ENCODE measurements at regions of chr20 and their contacts with region 1.

Region 1: GRCh38 chr20:21719592-21720214 is 14.2 kb downstream of the PAX1 start:
- DNase-seq: peak in 1 of 2 donors; percentile 52
- ATAC-seq: no peak
- H3K4me3 ChIP-seq: no peak overlapping the region
- H3K27ac ChIP-seq: no peak overlapping the region
- H3K4me1 ChIP-seq: peaks cover 0 to under 1% (median 0%) of the 10 kb centered on the region in 9 donors
- H3K27me3 ChIP-seq: peaks cover 0 to 47% (median 39%) of the 10 kb centered on the region in 7 donors
- CTCF ChIP-seq: peak; percentile 63 to 85 (median 74)

Region 2: DNA sequence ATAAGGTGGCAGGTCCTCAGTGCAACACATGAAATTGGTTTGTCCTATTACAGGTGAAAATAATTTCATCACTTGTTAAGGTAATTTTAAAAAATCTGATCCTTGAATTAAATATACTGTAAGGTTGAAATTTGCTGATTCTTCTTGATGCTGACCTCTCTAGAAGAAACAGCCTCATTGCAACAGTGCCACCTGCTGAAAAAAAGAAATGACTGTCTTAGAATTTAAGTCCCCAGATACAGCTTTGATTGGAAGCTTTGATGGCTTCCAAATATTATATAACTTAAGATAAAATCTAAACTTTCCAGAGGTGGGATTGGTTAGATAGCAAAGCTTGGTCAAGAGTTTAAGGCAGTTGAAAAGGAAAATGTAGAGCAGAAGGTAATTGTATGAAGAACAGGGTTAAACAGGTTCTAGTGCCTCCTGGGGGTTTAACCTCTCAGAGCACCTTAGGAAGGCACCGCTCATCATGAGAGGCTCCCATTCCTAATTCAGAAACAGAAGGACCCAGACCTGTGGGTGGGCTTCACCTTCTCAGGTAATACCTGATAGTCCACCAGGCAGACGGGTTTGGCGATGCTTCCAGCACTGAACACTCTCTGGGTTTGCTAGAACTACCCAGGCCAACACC is 386.7 kb after region 1 on chr20:
- intact Hi-C with region 1: loop called in 6 of 10 experiments (anchors 2 to 10 kb)
- DNase-seq: no peak
- ATAC-seq: no peak
- H3K4me3 ChIP-seq: no peak overlapping the region
- H3K27ac ChIP-seq: no peak overlapping the region
- H3K4me1 ChIP-seq: no peaks in the 10 kb centered on the region
- H3K27me3 ChIP-seq: no peaks in the 10 kb centered on the region
- CTCF ChIP-seq: peak in 7 of 9 donors; percentile 32 to 59 (median 46)

Region 3: DNA sequence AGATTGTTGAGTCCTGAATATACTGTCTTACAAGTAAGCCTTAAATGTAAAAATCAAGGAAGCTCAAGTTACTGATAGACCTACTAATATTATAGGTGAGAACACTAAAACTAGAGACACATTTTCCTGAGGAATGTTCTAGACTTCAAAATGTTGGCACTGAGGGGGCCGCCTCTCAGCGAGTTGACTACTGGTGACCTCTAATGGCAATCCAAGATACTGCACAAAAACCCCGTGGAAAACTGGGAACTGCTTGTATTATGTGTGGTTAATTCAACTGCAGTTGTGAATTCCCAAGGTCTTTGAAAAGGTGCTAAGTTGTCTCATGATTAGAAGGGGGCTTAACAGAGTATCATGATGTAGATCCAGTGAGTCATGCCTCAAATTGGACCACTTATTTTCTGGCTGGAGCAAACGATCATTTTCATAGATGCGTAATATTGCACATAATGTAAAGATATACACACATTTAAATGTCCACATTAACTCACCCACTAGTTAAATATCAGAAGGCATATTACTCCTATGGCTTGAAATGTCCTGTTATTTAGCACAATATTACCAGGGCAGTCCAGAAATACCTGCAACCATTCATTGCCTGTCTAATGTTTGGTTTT is 528.5 kb after region 1 on chr20:
- intact Hi-C with region 1: loop called in 2 of 10 experiments (anchors 10 kb)
- DNase-seq: no peak
- ATAC-seq: no peak
- H3K4me3 ChIP-seq: no peak overlapping the region
- H3K27ac ChIP-seq: no peak overlapping the region
- H3K4me1 ChIP-seq: no peaks in the 10 kb centered on the region
- H3K27me3 ChIP-seq: peaks cover 0 to 31% (median 12%) of the 10 kb centered on the region in 7 donors
- CTCF ChIP-seq: peak in 7 of 9 donors; percentile 45 to 66 (median 54)

Region 4: GRCh38 chr20:22303523-22303922 is 583.8 kb after region 1 on chr20:
- intact Hi-C with region 1: loop called in 1 of 10 experiments (anchors 10 kb)
- DNase-seq: no peak
- ATAC-seq: no peak
- H3K4me3 ChIP-seq: no peak overlapping the region
- H3K27ac ChIP-seq: no peak overlapping the region
- H3K4me1 ChIP-seq: no peaks in the 10 kb centered on the region
- H3K27me3 ChIP-seq: peaks cover 0 to 15% (median 0%) of the 10 kb centered on the region in 7 donors
- CTCF ChIP-seq: no peak

Region 5: DNA sequence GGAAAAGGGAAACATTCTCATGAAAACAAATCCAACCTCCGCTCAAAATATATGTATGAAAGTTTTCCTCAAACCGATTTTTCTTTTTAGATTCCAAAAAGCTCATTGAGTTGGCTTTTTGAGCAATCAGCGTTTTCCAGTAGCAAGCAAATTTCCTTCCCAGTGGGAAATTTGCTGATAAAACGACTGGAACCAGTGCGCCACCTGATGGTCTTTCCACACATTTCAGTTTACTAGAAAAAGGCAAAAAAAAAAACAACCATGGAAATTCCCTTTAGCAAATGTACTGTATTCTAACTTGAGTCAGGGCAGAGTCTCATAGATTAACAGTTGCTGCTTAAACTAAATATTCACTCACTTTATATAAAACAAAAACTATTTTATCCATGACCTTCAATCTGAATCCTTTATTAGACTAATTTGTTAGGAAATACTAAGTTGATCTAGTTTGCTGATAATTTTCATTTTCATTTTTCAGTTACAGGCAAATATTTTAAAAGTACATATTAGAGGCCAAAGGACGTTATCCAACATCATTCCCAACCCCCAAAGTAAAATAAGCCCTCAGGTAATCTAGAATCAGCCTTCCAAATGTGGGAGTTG is 593.1 kb after region 1 on chr20:
- intact Hi-C with region 1: loop called in 4 of 10 experiments (anchors 5 to 10 kb)
- DNase-seq: peak in 1 of 2 donors; percentile 9
- ATAC-seq: no peak
- H3K4me3 ChIP-seq: no peak overlapping the region
- H3K27ac ChIP-seq: no peak overlapping the region
- H3K4me1 ChIP-seq: no peaks in the 10 kb centered on the region
- H3K27me3 ChIP-seq: peaks cover 0 to 46% (median 30%) of the 10 kb centered on the region in 7 donors
- CTCF ChIP-seq: peak in 8 of 9 donors; percentile 28 to 76 (median 63)